ENCODE measurements at regions of chr10 and their contacts with region 1.

Region 1: GRCh38 chr10:25875556-25876165 is 58.4 kb upstream of the MYO3A start:
- DNase-seq: peak; percentile 27 to 70 (median 51)
- ATAC-seq: peak; percentile 55
- H3K4me3 ChIP-seq: no peak overlapping the region
- H3K4me3 Mint-ChIP-seq: no peak overlapping the region
- H3K27ac ChIP-seq: no peak overlapping the region
- H3K27ac Mint-ChIP-seq: no peak overlapping the region
- H3K4me1 ChIP-seq: no peaks in the 10 kb centered on the region
- H3K4me1 Mint-ChIP-seq: no peaks in the 10 kb centered on the region
- H3K27me3 ChIP-seq: no peaks in the 10 kb centered on the region
- H3K27me3 Mint-ChIP-seq: peaks cover 5% of the 10 kb centered on the region
- CTCF ChIP-seq: peak; percentile 88

Region 2: GRCh38 chr10:25080880-25081581 is 794.6 kb before region 1 on chr10:
- CTCF ChIA-PET with region 1: no interaction called
- POLR2A ChIA-PET with region 1: no interaction called
- intact Hi-C with region 1: no loop called
- DNase-seq: peak; percentile 27 to 75 (median 46)
- ATAC-seq: peak; percentile 54
- H3K4me3 ChIP-seq: no peak overlapping the region
- H3K4me3 Mint-ChIP-seq: no peak overlapping the region
- H3K27ac ChIP-seq: no peak overlapping the region
- H3K27ac Mint-ChIP-seq: no peak overlapping the region
- H3K4me1 ChIP-seq: no peaks in the 10 kb centered on the region
- H3K4me1 Mint-ChIP-seq: no peaks in the 10 kb centered on the region
- H3K27me3 ChIP-seq: peaks cover under 1 to 5% of the 10 kb centered on the region in 2 experiments
- H3K27me3 Mint-ChIP-seq: peaks cover 14% of the 10 kb centered on the region
- CTCF ChIP-seq: peak; percentile 85

Region 3: DNA sequence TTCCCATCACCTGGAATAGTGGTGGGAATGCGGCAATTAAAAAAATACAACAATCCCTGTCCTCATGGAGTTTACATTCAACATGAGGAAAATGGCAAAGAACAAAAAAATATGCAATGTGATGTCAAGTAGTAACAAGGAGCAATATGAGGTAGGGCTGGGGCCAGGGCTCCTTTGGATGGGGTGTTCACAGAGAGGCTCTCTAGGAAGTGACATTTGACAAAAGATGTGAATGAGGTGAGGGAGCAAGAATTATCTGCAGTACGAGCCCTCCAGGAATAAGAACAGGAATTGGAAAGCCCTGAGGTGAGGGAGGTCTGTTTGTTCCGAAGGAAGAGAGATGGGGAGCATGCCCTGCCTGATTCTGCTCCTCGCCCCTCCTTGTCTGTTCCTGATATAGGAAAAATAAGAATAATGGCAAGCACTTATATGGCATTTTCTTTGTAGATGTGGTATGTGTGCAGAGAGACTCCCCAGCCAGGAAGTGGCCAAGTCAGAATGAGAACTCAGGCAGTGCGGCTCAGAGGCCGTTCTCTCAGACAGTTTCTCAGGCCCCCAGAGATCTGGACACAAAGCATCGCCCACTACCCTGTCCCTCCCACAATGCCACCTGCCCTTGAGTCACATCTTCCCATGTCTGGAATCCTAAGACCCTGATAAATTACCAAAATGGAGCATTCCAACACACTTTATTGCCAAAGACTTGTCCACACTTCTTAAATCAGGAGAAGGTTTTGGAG is 668.1 kb after region 1 on chr10:
- CTCF ChIA-PET with region 1: no interaction called
- POLR2A ChIA-PET with region 1: no interaction called
- intact Hi-C with region 1: no loop called
- DNase-seq: no peak
- ATAC-seq: no peak
- H3K4me3 ChIP-seq: no peak overlapping the region
- H3K4me3 Mint-ChIP-seq: no peak overlapping the region
- H3K27ac ChIP-seq: peak overlapping the region in 1 of 2 donors; percentile 31
- H3K27ac Mint-ChIP-seq: peak overlapping the region; percentile 87
- H3K4me1 ChIP-seq: peaks cover 12% of the 10 kb centered on the region
- H3K4me1 Mint-ChIP-seq: peaks cover 8% of the 10 kb centered on the region
- H3K27me3 ChIP-seq: no peaks in the 10 kb centered on the region
- H3K27me3 Mint-ChIP-seq: no peaks in the 10 kb centered on the region
- CTCF ChIP-seq: no peak

Region 4: DNA sequence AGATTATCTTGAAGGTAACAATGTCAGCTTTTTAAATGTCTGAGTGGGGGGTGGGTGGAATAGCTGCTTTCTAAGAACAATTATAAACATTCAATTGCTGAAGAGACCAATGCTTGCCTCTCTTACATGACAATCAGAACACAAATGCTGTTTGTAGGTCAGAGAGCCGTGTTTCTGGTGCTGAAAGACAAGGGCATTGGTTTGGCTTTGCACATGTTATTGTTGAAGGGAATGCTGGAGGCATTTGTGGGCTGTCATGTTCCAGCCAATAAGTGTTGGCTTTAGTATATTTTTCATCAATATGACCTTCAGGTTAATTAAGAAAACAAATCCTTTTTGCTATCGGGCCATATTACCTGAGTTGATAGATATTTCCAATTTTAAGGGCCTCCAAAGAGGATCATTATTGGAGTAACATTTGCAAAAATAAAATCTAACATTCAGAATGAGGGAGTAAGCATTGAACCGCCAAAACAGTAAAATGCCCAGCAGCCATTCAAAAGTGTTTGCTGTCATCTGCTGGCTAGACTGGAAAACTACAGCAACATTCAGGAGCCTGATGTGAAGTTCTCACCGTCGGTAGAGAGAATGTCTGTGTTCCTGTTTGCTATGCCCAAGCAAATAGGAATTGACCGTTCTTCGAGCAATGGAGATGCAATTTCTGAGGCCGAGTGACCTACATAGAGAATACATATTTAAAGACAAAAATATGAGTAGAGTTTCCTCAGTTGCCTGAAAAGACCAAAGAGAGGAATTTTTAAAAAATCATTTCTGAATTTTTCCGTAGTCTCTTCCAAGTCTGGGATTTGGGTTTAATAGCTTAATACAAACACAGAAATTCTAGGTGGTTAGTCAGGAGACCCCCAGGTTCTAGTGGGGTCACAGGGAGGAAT is 681.3 kb after region 1 on chr10:
- CTCF ChIA-PET with region 1: interaction called, 4 read pairs
- POLR2A ChIA-PET with region 1: no interaction called
- intact Hi-C with region 1: loop called (anchors 1 to 5 kb)
- DNase-seq: peak in 12 of 14 experiments; percentile 10 to 72 (median 20)
- ATAC-seq: peak; percentile 78
- H3K4me3 ChIP-seq: no peak overlapping the region
- H3K4me3 Mint-ChIP-seq: no peak overlapping the region
- H3K27ac ChIP-seq: no peak overlapping the region
- H3K27ac Mint-ChIP-seq: peak overlapping the region; percentile 80
- H3K4me1 ChIP-seq: no peaks in the 10 kb centered on the region
- H3K4me1 Mint-ChIP-seq: peaks cover 31% of the 10 kb centered on the region
- H3K27me3 ChIP-seq: no peaks in the 10 kb centered on the region
- H3K27me3 Mint-ChIP-seq: no peaks in the 10 kb centered on the region
- CTCF ChIP-seq: peak; percentile 80

Measured in CD4-positive, alpha-beta T cell (primary cell).